ENCODE measurements at regions of chr5 and their contacts with region 1.

Region 1: DNA sequence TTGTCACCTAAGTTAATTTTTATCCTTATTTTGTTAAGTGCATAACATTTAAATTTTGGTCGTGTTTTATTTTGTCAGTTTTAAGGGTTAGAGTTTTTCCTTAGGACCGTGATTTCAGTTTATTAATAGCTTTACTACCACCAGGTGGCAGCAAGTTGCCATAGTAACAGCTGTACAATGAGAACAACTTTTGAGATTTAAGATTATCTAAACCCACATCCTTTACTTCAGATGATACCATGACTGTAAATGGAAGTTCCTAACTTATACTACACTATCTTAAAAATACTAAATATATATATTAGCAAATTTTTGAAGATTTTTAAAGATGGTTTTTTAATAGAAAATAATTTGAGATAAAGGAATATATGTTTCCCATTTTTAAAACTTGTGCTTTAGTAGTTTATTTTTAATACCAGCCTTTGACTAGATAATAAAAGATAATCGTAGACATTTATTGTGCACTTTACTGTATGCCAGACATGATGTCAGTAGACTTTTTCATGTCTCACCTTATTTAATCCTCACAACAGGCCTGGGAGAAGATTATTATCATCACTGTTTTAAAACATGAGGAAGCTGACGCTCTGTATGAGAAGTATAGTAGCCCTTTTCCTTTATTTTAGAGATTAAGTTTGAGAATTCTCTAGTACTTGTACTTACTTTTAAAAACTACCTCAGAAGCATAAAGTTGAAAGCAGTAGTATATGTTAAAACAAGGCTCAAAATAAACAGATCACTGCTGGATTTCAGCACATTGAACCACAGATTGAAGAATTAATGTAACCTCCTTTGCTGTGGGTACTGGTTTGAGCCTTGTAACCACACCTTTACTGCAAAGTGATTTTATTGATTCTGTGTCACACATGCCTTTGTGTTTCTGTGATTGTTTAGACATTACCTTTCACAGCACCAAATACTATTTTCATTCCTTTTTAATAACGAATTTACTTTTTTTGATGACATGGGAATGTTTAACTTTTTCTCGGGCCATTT is 27.5 kb downstream of the SREK1 start:
- DNase-seq: peak in 1 of 10 donors; percentile 16

Region 2: GRCh38 chr5:66223636-66224035 is 52.0 kb after region 1 on chr5:
- intact Hi-C with region 1: loop called (anchors 2 kb)
- DNase-seq: peak in 5 of 10 donors; percentile 16 to 88 (median 62)

Region 3: DNA sequence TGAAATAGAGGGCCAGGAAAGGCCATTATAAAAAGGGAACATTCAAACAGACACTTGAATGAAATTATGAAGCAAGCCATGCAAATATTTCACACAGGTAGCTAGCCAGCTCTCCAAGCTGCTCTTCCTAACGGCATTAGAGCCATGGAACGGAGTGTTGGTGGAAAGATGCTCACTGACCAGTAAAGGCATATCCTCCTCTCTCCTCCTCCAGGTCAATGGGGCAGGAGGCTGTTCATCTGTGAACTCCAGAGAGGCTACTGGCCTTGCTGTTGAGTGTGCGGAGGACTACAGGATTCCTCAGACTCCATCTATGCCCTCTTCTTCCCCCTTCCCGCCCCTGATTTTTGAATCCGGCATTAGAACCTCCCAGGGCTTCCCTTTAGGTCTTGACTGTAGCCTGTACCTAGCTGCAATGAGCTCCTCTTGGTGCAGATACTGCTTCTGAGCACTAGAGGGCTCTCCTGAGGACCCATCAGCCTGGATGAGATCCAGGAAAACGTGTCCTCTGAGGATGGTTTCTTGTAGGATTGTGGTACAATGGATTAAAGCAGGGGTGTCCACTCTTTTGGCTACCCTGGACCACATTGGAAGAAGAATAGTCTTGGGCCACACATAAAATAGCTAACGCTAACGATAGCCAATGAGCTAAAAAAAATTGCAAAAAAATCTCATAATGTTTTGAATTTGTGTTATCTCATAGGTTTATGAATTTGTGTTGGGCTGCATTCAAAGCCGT is 134.6 kb after region 1 on chr5:
- intact Hi-C with region 1: loop called (anchors 10 kb)
- DNase-seq: peak in 5 of 10 donors; percentile 40 to 92 (median 45)

Region 4: DNA sequence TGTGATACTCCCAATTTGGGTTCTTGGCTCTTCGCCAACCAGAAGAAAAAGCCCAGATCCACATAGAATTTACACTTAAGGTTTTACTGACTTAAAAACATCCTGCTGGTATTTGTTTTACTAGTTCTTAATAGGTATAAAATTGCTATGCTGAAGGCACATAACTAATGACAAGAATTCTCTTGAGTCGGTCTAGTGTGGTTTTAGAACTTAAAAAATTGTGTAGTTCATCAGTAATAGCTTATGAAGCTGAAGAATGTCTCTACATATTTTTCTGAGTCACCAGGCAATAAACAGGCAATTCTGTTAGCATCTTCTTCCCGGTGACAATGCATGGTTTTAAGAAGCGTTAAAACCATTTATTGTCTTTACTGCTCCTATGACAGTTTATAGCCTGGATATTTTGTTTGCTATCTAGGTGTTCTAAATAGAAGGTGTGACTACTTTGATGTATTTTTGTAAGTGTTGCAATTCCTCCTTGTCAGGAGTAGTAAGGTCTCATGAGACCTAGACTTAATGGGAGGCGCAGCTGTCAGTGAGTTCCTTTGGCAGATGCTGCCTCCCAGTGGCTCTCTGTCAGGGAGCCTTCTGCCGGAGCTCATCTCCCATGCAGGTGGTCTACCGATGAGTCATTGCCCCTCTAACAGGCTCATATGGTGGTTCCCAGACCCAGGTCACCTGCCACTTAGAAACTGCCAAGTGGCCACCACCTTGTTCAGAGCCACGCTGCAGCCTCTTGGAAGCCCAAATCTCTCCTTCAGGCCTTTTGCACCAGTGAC is 598.4 kb after region 1 on chr5:
- intact Hi-C with region 1: loop called (anchors 10 kb)
- DNase-seq: peak in 7 of 10 donors; percentile 17 to 90 (median 31)

Measured in posterior cingulate gyrus (tissue), 11 donors.